ENCODE measurements at regions of chr17 and their contacts with region 1.

Region 1: DNA sequence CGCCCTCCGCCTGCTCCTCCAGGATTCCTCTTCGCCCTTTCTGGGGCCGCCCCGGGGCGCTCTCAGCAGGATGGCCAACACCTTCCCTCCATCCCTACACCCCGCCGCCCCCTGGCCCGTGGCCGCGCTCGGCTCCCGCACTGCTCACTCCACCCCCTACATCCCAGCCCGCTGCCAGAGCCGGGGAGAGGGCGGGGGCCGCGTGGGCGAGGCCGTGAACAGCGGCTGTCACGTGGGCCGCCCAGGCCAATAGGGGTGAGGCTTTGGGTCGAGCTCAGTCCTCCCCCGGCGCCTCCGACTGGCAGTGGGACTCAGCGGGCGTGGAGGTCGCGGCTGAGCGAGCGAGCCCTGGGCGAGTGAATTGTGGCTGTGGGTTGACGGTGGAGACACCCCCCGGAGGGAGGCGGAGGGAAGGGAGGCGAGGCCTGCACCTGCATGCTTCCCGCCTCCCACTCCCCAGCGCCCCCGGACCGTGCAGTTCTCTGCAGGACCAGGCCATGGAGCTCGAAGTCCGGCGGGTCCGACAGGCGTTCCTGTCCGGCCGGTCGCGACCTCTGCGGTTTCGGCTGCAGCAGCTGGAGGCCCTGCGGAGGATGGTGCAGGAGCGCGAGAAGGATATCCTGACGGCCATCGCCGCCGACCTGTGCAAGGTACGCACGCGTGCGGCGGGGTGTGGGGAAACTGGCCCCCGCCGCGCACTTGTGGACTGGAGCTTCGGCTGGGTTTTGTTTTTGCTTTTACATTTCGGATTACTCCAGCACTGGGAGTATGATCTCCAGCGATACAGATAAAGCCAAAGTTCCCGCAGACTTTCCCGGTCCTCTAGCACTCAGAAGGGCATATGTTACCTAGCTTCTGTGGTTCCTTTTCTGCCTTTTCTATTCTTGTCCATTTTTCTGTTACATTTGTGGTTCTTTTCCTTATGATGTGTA is at the start of gene ALDH3A2:
- DNase-seq: peak; percentile 99
- ATAC-seq: peak; percentile 99
- total RNA-seq, gene ALDH3A2: 53.6 TPM

Region 2: DNA sequence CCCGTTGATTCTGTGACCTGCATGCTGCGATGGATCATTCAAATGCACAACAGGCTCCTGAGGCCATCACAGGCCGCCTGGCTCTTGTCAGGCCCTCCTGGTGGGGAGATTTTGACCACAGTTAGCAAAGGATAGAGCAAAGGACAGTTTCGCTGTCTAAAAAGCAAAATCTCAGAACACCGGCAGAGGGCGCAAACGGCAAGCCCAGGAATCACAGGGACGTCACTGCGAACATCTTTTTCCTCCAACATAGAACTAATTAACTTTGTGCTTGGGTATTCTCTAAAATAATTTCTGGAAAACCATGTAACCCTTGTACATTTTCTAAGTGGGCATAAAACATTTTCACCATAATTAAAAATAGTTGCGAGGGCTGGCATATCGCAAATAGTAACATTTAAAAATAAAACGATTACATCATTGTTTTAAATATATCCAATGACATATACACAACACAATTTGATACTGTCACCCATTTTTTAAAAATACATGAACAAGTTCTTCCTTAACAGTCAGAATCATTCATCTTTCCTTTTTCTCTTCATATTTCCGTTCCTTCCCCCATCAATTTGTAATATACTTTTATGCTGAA is 134.7 kb before region 1 on chr17:
- intact Hi-C with region 1: loop called (anchors 5 kb)
- DNase-seq: peak; percentile 78
- ATAC-seq: peak; percentile 86

Region 3: DNA sequence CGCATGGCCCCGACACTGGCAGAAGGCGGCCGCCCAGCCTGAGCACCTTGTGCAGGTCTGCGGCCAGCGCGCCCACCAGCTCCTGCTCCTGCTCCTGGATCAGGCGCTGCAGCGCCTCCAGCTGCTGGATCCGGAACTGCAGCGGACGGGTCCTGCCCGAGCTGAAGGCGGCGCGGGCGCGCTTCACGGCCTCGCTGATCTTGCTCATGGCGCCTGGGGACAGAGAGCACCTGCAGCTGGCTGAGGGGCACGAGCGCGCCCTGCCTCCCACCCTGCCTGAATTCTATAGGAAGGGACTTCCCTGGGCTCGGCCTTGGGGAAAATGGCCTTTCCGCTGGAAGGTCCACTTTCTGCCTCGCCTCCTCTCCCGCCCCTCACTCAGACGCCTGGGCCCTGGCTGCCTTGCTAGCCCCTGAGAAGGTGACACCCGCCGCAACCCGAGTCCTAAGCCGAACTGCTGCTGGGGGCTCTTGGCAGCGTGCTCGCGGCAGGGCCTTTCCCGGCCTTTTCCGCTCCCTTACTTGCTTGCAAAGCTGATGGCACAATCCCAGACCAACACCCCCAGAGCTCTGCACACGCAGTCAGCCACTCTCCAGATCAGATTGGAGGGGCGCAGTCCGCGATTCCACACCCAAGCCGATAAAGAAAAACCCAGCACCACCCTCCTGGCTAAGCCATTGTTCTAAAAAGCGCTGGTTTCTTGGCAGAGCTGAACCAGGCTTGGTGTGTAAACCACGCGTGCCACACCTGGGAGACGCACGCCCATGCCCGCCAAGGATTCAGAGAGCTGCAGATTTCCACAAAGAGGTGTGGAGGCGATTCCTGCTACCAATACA is 96.4 kb after region 1 on chr17:
- intact Hi-C with region 1: loop called (anchors 5 kb)
- DNase-seq: peak; percentile 96
- ATAC-seq: peak; percentile 96